OCI-LY7 (cell line): ENCODE measurements at regions of chr1 and their contacts with region 1.

Region 1: DNA sequence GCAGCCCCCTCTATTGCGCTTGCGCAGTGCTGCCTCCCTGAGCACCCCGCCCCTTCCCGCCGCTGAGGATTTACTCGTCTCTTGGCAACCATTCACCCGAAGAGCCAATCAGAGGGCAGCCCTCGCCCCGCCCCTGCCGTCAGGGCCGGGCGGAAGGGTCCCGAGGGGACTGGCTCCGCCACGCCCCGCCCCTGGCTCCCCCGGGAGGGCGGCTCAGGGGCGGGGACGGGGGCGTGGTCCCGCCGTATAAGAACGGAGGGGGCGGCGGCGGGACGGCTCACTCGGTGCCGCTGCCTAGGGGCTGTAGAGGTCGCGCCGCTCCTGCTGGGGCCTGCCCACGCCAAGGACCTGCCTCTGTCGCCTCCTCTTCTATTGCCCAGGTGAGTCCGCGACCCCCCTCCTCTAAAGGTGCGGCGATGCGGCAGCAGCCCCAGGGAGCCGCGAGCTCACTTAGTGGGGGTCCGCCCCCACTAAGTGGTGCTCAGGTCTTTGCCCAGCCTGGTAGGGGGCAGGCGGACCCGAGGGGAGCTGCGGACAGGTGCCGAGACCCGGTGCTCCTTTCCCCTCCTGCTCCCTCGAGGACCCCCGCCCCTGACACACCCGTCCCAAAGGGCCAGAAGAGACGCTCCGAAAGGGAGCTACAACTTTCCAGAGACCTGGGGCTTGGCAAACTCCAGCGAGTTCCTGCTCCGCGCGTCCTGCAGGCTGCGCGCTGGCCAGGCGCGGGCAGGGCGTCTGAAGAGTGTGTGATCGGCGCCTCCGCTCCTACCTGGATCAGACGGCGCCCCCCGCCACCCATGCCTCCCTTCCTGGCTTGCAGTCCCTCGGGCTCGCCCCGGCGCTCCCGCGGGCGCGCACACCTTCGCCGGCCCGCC is at the start of gene TENT5C:
- DNase-seq: peak; percentile 99
- H3K4me3 ChIP-seq: peak within 1 kb of the TSS; percentile 90
- H3K27ac ChIP-seq: peak within 1 kb of the TSS; percentile 35
- H3K4me1 ChIP-seq: peaks cover 27% of the 10 kb centered on the region
- CTCF ChIP-seq: no peak
- total RNA-seq, gene TENT5C: 11.6 and 13.3 TPM in 2 replicates

Region 2: DNA sequence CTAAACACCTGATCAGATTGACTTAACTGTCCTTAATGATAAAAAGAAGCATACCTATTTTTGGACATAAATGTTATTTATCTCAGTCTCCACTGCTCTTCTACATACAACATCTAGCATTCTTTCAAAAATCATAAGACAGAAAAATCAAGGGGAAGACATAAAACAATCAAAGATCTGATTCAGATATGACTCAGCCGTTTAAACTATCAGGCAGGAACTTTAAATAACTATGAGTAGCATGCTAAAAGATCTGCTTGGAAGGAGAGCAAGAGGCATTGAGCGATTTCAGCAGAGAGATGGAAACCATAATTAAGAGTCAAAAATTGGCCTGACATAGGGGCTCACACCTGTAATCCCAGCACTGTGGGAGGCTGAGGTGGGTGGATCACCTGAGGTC is 1656.9 kb before region 1 on chr1:
- CTCF ChIA-PET with region 1: no interaction called
- POLR2A ChIA-PET with region 1: no interaction called
- intact Hi-C with region 1: no loop called
- DNase-seq: no peak
- H3K4me3 ChIP-seq: no peak overlapping the region
- H3K27ac ChIP-seq: no peak overlapping the region
- H3K4me1 ChIP-seq: peaks cover 6% of the 10 kb centered on the region
- CTCF ChIP-seq: no peak

Region 3: DNA sequence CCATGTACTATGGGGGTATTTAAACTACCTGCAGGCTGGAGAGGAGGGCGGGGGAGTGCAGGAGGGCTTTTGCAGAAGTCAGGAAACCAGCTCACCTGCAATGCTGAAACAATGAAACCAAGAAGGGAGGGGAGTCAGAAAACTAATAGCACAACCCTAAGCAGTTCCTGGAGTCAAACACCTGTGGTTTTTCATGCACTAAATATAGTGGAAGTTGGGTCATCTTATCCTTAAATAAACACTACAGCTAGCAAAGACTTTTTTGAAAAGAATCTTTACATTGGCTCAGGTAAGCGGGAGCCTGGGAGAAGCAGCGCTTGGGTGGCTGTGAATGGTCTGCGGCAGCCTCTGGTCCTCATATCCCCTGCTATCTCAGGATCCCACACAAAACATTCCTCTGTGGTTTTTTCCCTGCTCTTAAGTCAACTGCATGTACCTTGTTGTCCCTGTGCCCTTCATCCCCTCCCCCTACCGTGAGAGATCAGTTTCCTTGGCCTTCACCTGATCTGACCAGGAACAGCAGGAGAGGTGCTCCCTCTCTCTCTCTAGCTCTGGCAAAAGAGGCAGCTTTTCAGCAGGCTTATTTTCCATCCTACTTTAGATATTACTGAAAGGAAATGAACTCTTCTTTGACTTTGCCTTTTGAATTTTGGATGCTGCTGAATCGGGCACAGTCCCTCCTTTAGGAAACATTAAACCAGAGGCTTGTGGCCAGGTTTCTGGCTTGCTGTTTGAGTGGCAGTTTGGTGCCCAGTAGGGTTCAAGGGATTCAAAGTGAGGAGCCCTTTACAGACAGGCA is 26.5 kb after region 1 on chr1:
- CTCF ChIA-PET with region 1: interaction called, 5 read pairs
- POLR2A ChIA-PET with region 1: interaction called, 281 read pairs
- intact Hi-C with region 1: loop called (anchors 1 kb)
- DNase-seq: peak; percentile 83
- H3K4me3 ChIP-seq: peak overlapping the region; percentile 56
- H3K27ac ChIP-seq: peak overlapping the region; percentile 85
- H3K4me1 ChIP-seq: peaks cover 99% of the 10 kb centered on the region
- CTCF ChIP-seq: no peak

Region 4: DNA sequence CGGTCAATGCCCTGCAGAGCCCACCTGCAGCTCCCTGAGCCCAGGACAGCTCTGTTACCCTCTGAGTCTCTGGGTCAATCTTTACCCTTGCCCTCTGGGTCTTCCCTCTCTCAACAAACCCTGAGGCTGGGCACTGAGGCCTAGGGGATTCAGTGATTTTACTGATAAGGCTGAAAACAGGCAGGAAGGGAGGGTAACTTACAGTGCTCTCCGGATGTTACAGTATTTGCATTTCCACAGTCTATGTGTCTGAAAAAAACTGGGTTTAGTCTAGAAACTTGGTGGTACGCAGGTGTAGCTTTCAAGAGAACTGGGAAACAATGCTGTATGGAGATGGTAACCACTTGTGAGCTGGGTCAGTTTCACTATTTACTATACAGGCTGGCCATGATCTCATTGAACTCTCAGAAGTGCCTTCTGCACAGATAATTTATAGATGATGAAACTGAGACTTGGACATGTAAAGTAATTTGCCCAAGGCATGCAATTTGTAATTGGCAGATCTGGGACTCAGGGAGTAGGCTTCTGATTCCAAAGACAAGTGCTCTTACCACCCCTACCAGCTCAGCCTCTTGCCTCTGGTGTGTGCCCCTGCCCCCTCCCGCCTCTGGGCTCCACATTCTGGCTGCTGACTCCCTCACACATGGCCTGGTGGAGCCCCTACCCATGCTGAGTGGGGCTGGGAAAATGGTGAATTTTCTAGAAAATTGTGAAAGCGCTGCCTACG is 48.6 kb after region 1 on chr1:
- CTCF ChIA-PET with region 1: interaction called, 3 read pairs
- POLR2A ChIA-PET with region 1: interaction called, 13 read pairs
- intact Hi-C with region 1: loop called (anchors 1 kb)
- DNase-seq: peak; percentile 95
- H3K4me3 ChIP-seq: peak overlapping the region; percentile 48
- H3K27ac ChIP-seq: peak overlapping the region; percentile 98
- H3K4me1 ChIP-seq: peaks cover 99% of the 10 kb centered on the region
- CTCF ChIP-seq: no peak

Region 5: DNA sequence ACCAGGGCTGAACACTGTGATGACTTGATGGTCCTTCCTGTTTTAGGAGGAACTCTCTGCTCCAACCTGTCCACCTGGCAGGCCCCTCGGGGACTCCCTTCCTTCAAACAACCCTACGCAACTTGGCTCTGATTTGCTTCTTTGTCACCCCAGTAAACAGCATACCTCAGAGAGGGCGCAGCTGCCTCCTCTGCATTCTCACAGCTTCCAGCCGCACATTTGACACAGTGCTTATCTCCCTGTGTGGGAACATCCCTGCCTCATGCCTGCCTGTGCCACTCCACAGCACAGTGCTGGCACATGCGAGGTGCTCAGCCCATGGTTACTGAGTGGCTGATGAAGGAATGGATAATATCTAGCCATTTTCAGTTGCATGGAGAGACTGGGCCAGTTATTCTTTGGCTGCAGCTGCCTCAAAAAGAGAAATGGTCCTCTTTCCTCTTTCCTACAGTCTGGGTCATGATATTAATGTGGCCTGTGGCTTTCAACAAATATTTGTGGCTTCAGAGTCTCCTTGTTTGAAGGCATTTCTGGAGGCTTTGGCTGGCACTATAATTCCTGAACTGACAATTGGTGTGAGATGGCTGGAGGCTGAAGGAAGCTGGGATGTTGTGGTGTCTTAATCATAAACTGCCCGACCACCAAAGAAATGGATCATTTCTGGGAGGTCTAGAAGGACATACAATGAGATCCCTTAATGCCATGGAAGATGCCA is 77.7 kb after region 1 on chr1:
- CTCF ChIA-PET with region 1: no interaction called
- POLR2A ChIA-PET with region 1: interaction called, 13 read pairs
- intact Hi-C with region 1: no loop called
- DNase-seq: peak; percentile 73
- H3K4me3 ChIP-seq: no peak overlapping the region
- H3K27ac ChIP-seq: peak overlapping the region; percentile 22
- H3K4me1 ChIP-seq: peaks cover 24% of the 10 kb centered on the region
- CTCF ChIP-seq: no peak